ENCODE measurements at regions of chr6 and their contacts with region 1.

Region 1: DNA sequence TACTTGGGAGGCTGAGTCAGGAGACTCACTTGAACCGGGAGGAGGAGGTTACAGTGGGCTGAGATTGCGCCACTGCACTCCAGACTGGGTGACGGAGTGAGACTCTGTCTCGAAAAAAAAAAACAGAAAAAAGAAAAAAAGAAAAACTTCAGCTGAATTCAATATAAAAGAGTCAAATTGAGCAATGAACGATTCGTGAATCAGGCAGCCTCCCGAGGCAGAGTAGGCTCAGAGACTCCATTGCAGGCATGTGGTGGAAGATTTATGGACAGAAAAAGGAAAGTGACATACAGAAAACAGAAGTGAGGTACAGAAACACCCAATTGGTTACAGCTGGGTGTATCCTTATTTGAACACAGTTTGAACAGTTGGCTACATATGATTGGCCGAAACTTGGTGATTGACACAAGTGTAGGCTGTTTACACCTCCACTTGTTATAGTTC is 56.3 kb downstream of the HLA-DPB1 start:
- DNase-seq: no peak
- ATAC-seq: no peak
- H3K4me3 ChIP-seq: no peak overlapping the region
- H3K4me3 Mint-ChIP-seq: no peak overlapping the region
- H3K27ac ChIP-seq: no peak overlapping the region
- H3K27ac Mint-ChIP-seq: no peak overlapping the region
- H3K4me1 ChIP-seq: no peaks in the 10 kb centered on the region
- H3K4me1 Mint-ChIP-seq: no peaks in the 10 kb centered on the region
- H3K27me3 ChIP-seq: no peaks in the 10 kb centered on the region
- H3K27me3 Mint-ChIP-seq: peaks cover 13% of the 10 kb centered on the region
- CTCF ChIP-seq: no peak

Region 2: DNA sequence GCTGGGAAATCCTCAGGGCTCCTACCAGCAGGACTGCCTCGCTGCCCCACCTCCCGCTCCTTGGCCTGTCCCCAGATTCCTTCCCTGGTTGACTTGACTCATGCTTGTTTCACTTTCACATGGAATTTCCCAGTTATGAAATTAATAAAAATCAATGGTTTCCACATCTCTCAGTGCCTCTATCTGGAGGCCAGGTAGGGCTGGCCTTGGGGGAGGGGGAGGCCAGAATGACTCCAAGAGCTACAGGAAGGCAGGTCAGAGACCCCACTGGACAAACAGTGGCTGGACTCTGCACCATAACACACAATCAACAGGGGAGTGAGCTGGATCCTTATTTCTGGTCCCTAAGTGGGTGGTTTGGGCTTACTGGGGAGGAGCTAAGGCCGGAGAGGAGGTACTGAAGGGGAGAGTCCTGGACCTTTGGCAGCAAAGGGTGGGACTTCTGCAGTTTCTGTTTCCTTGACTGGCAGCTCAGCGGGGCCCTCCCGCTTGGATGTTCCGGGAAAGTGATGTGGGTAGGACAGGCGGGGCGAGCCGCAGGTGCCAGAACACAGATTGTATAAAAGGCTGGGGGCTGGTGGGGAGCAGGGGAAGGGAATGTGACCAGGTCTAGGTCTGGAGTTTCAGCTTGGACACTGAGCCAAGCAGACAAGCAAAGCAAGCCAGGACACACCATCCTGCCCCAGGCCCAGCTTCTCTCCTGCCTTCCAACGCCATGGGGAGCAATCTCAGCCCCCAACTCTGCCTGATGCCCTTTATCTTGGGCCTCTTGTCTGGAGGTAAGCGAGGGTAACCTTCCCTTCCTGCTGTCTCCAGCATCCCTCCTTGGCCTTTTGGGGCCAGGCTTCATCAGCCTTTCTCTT is 1186.4 kb before region 1 on chr6 and contains the start of gene CFB:
- CTCF ChIA-PET with region 1: no interaction called
- POLR2A ChIA-PET with region 1: no interaction called
- intact Hi-C with region 1: no loop called
- DNase-seq: no peak
- ATAC-seq: no peak
- H3K4me3 ChIP-seq: no peak within 1 kb of the TSS
- H3K4me3 Mint-ChIP-seq: no peak within 1 kb of the TSS
- H3K27ac ChIP-seq: no peak within 1 kb of the TSS
- H3K27ac Mint-ChIP-seq: no peak within 1 kb of the TSS
- H3K4me1 ChIP-seq: no peaks in the 10 kb centered on the region
- H3K4me1 Mint-ChIP-seq: no peaks in the 10 kb centered on the region
- H3K27me3 ChIP-seq: peaks cover 0 to 2% of the 10 kb centered on the region in 2 experiments
- H3K27me3 Mint-ChIP-seq: peaks cover 17% of the 10 kb centered on the region
- CTCF ChIP-seq: no peak
- total RNA-seq, gene CFB: 1.3 to 2.3 TPM

Region 3: GRCh38 chr6:32113386-32114352 is 1018.4 kb before region 1 on chr6:
- CTCF ChIA-PET with region 1: no interaction called
- POLR2A ChIA-PET with region 1: no interaction called
- intact Hi-C with region 1: no loop called
- DNase-seq: no peak
- ATAC-seq: no peak
- H3K4me3 ChIP-seq: no peak overlapping the region
- H3K4me3 Mint-ChIP-seq: no peak overlapping the region
- H3K27ac ChIP-seq: no peak overlapping the region
- H3K27ac Mint-ChIP-seq: peak overlapping the region; percentile 71
- H3K4me1 ChIP-seq: peaks cover 5% of the 10 kb centered on the region
- H3K4me1 Mint-ChIP-seq: peaks cover 12% of the 10 kb centered on the region
- H3K27me3 ChIP-seq: no peaks in the 10 kb centered on the region
- H3K27me3 Mint-ChIP-seq: no peaks in the 10 kb centered on the region
- CTCF ChIP-seq: no peak

Region 4: GRCh38 chr6:32825966-32826365 is 306.1 kb before region 1 on chr6:
- CTCF ChIA-PET with region 1: no interaction called
- POLR2A ChIA-PET with region 1: no interaction called
- intact Hi-C with region 1: no loop called
- DNase-seq: peak in 1 of 9 experiments; percentile 39
- ATAC-seq: no peak
- H3K4me3 ChIP-seq: no peak overlapping the region
- H3K4me3 Mint-ChIP-seq: no peak overlapping the region
- H3K27ac ChIP-seq: no peak overlapping the region
- H3K27ac Mint-ChIP-seq: no peak overlapping the region
- H3K4me1 ChIP-seq: no peaks in the 10 kb centered on the region
- H3K4me1 Mint-ChIP-seq: peaks cover 2% of the 10 kb centered on the region
- H3K27me3 ChIP-seq: no peaks in the 10 kb centered on the region
- H3K27me3 Mint-ChIP-seq: no peaks in the 10 kb centered on the region
- CTCF ChIP-seq: no peak

Region 5: GRCh38 chr6:33183071-33183683 is 51.1 kb after region 1 on chr6:
- CTCF ChIA-PET with region 1: no interaction called
- POLR2A ChIA-PET with region 1: no interaction called
- intact Hi-C with region 1: loop called in 1 of 2 experiments (anchors 1 kb)
- DNase-seq: peak in 2 of 9 experiments; percentile 34 to 53
- ATAC-seq: no peak
- H3K4me3 ChIP-seq: peak overlapping the region in 1 of 2 experiments; percentile 6
- H3K4me3 Mint-ChIP-seq: peak overlapping the region; percentile 52
- H3K27ac ChIP-seq: peak overlapping the region in 1 of 2 experiments; percentile 62
- H3K27ac Mint-ChIP-seq: peak overlapping the region; percentile 90
- H3K4me1 ChIP-seq: peaks cover 19% of the 10 kb centered on the region
- H3K4me1 Mint-ChIP-seq: peaks cover 23% of the 10 kb centered on the region
- H3K27me3 ChIP-seq: peaks cover 0 to 16% of the 10 kb centered on the region in 2 experiments
- H3K27me3 Mint-ChIP-seq: peaks cover 12% of the 10 kb centered on the region
- CTCF ChIP-seq: no peak

Region 6: DNA sequence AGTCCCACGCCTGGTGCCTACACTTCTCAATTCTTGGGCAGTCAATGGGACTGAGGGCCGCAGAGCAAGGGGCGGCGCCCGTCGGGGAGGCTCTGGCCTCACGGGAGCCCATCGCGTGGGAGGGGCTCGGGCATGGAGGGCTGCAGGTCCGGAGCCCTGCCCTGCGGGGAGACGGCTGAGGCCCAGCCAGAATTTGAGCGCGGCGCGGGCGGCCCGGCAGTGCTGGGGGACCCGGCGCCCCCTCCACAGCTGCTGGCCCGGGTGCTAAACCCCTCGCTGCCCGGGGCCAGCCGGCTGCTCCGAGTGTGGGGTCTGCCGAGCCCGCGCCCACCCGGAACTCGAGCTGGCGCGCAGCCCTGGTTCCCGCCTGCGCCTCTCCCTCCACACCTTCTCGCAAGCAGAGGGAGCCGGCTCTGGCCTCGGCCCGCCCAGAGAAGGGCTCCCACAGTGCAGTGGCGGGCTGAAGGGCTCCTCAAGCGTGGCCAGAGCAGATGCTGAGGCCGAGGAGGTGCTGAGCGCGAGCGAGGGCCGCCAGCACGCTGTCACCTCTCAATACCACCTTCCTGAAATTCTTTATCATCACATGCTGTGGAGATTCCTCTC is 389.5 kb after region 1 on chr6:
- CTCF ChIA-PET with region 1: no interaction called
- POLR2A ChIA-PET with region 1: no interaction called
- intact Hi-C with region 1: no loop called
- DNase-seq: no peak
- ATAC-seq: no peak
- H3K4me3 ChIP-seq: no peak overlapping the region
- H3K4me3 Mint-ChIP-seq: no peak overlapping the region
- H3K27ac ChIP-seq: no peak overlapping the region
- H3K27ac Mint-ChIP-seq: no peak overlapping the region
- H3K4me1 ChIP-seq: no peaks in the 10 kb centered on the region
- H3K4me1 Mint-ChIP-seq: no peaks in the 10 kb centered on the region
- H3K27me3 ChIP-seq: peaks cover 0 to 2% of the 10 kb centered on the region in 2 experiments
- H3K27me3 Mint-ChIP-seq: no peaks in the 10 kb centered on the region
- CTCF ChIP-seq: no peak